ENCODE measurements at regions of chr19 and their contacts with region 1.

Region 1: GRCh38 chr19:1929021-1929742 is 11.8 kb upstream of the CSNK1G2 start:
- DNase-seq: peak; percentile 89
- H3K4me3 ChIP-seq: peak overlapping the region; percentile 15 to 39 (median 31)
- H3K27ac ChIP-seq: peak overlapping the region in 1 of 4 donors; percentile 0
- H3K4me1 ChIP-seq: peaks cover 0 to 16% (median 14%) of the 10 kb centered on the region in 4 donors
- H3K27me3 ChIP-seq: no peaks in the 10 kb centered on the region
- CTCF ChIP-seq: peak; percentile 59 to 91 (median 86)
- EP300 ChIP-seq: no peak
- POLR2A ChIP-seq: no peak

Region 2: GRCh38 chr19:1848399-1849131 is 80.6 kb before region 1 on chr19 and contains the start of gene REXO1:
- intact Hi-C with region 1: no loop called
- DNase-seq: peak; percentile 96
- H3K4me3 ChIP-seq: peak within 1 kb of the TSS; percentile 92 to 100 (median 100)
- H3K27ac ChIP-seq: peak within 1 kb of the TSS; percentile 95 to 98 (median 97)
- H3K4me1 ChIP-seq: peaks cover 0 to 68% (median 55%) of the 10 kb centered on the region in 4 donors
- H3K27me3 ChIP-seq: peaks cover 4 to 22% (median 10%) of the 10 kb centered on the region in 3 donors
- CTCF ChIP-seq: peak; percentile 72 to 94 (median 89)
- EP300 ChIP-seq: no peak
- POLR2A ChIP-seq: no peak
- total RNA-seq, gene REXO1: 8.6 to 61.8 (median 13.1) TPM

Region 3: GRCh38 chr19:2070436-2070827 is 141.2 kb after region 1 on chr19:
- intact Hi-C with region 1: loop called (anchors 5 kb)
- DNase-seq: no peak
- H3K4me3 ChIP-seq: no peak overlapping the region
- H3K27ac ChIP-seq: peak overlapping the region in 3 of 4 donors; percentile 62 to 66 (median 63)
- H3K4me1 ChIP-seq: peaks cover 0 to 12% (median 10%) of the 10 kb centered on the region in 4 donors
- H3K27me3 ChIP-seq: no peaks in the 10 kb centered on the region
- CTCF ChIP-seq: no peak
- EP300 ChIP-seq: no peak
- POLR2A ChIP-seq: no peak

Measured in sigmoid colon (tissue), 7 donors.